Mammary epithelial cell (primary cell): ENCODE measurements at regions of chrX and their contacts with region 1.

Region 1: DNA sequence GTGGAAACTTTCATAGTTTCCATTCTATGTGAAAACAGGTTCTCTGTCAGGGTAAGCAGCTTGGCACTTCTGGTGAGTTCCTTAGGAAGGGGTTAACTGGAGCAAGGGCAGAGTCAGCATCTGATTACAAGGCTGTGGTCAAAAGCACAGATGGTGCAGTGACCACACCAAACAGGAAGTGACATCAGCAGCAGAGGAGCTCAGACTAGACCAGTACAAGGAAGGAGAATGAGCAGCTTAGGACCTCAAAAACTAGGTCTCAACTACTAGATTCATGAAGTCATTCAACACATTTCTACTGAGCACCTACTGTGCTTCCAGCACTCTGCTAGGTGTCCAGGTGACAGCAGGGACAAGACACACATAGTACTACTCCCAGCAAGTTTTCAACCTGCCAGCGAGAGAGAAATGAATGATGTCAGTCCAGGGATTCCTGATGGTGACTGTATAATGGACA is 130.2 kb downstream of the AMELX start:
- DNase-seq: peak; percentile 30
- H3K4me3 ChIP-seq: no peak overlapping the region
- H3K27ac ChIP-seq: no peak overlapping the region
- H3K4me1 ChIP-seq: peaks cover 4% of the 10 kb centered on the region
- H3K27me3 ChIP-seq: no peaks in the 10 kb centered on the region
- CTCF ChIP-seq: no peak

Region 2: DNA sequence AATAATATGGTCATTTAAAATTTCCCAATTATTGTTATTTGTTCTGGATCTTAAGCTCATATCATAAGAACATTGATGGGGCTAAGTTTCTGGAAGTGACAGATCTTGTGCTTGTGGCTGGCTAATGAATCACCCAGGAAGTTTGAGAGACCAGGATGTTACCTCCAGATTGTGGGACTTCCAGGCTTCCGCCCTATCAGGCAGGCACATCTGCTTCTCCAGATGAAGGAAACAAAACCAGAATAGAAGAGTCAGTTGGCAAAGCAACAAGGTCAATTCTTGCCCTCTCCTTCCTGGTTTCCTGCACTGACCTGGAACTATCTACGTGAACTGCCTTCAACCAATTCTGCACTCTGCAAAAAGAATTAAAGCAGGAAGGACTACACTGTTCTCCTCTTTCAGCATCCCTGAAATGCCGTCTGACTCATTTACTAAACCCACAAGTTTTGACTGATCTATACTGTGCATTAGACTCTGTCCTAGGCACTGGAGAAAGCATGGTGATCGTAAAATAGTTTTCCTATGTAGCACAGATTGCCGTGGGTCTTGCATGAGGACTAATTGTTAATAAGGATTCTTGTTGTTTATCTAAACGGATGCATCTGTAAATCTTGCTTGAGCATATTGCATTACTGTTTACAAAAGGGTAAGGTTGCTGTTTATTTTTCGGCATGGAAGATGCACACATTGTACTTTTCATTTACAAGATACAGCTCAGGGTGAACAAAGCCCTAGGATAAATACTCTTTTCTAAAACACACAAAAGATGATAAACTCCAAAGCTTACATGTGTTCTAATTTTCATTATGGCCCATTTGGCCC is 55.6 kb before region 1 on chrX:
- CTCF ChIA-PET with region 1: no interaction called
- dilution Hi-C with region 1: loop called (anchors 5 kb)
- in situ Hi-C with region 1: no loop called
- intact Hi-C with region 1: no loop called
- DNase-seq: no peak
- H3K4me3 ChIP-seq: no peak overlapping the region
- H3K27ac ChIP-seq: no peak overlapping the region
- H3K4me1 ChIP-seq: no peaks in the 10 kb centered on the region
- H3K27me3 ChIP-seq: no peaks in the 10 kb centered on the region
- CTCF ChIP-seq: no peak

Region 3: GRCh38 chrX:11499076-11500044 is 76.0 kb after region 1 on chrX:
- CTCF ChIA-PET with region 1: no interaction called
- dilution Hi-C with region 1: no loop called
- in situ Hi-C with region 1: no loop called
- intact Hi-C with region 1: no loop called
- DNase-seq: no peak
- H3K4me3 ChIP-seq: no peak overlapping the region
- H3K27ac ChIP-seq: no peak overlapping the region
- H3K4me1 ChIP-seq: no peaks in the 10 kb centered on the region
- H3K27me3 ChIP-seq: no peaks in the 10 kb centered on the region
- CTCF ChIP-seq: no peak

Region 4: GRCh38 chrX:12901486-12901885 is 1478.1 kb after region 1 on chrX:
- CTCF ChIA-PET with region 1: no interaction called
- dilution Hi-C with region 1: no loop called
- in situ Hi-C with region 1: no loop called
- intact Hi-C with region 1: no loop called
- DNase-seq: peak; percentile 48
- H3K4me3 ChIP-seq: no peak overlapping the region
- H3K27ac ChIP-seq: no peak overlapping the region
- H3K4me1 ChIP-seq: no peaks in the 10 kb centered on the region
- H3K27me3 ChIP-seq: no peaks in the 10 kb centered on the region
- CTCF ChIP-seq: peak; percentile 79